ENCODE measurements at regions of chr7 and their contacts with region 1.

Region 1: DNA sequence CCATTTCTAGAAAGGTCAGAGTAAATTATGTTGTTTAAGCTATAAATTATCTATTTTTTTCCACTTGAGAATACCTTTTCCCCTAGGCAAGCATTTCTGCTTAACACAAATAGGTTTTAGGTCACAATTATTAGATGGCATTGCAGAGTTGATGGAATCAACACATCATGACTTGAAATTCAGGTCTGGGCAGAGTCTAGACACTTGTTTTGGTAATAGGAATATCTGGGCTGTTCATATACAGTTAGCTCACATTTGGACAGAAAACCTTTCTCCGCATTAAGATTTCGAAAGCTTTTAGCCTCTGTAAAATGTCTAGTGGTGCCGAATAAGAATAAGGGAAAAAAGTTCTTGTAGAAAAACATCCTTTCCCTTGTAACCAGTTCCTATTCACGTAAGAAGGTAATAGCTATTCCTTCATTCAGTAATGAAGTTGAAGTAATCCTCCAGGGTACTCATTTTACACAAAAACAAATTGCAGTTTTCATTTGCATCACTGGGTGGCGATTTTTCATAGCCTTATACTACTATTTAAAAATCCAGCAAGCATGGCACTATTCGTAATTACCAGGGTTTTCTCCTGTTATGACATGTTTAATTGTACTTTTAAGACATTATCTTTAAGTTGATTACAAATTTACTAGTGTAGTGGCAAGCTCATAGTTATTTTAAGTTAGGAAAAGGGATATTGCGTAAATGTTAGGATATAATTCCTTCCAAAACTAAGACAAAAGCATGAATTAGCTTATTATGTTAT is 37.0 kb downstream of the RPA3 start:
- DNase-seq: peak; percentile 14 to 23
- ATAC-seq: peak; percentile 98 to 99
- H3K4me3 ChIP-seq: peak overlapping the region; percentile 7 to 33 (median 12)
- H3K27ac ChIP-seq: peak overlapping the region; percentile 67 to 85 (median 73)
- H3K4me1 ChIP-seq: peaks cover 22 to 25% of the 10 kb centered on the region in 2 donors
- H3K27me3 ChIP-seq: no peaks in the 10 kb centered on the region
- CTCF ChIP-seq: peak; percentile 48 to 70 (median 56)
- POLR2A ChIP-seq: no peak

Region 2: DNA sequence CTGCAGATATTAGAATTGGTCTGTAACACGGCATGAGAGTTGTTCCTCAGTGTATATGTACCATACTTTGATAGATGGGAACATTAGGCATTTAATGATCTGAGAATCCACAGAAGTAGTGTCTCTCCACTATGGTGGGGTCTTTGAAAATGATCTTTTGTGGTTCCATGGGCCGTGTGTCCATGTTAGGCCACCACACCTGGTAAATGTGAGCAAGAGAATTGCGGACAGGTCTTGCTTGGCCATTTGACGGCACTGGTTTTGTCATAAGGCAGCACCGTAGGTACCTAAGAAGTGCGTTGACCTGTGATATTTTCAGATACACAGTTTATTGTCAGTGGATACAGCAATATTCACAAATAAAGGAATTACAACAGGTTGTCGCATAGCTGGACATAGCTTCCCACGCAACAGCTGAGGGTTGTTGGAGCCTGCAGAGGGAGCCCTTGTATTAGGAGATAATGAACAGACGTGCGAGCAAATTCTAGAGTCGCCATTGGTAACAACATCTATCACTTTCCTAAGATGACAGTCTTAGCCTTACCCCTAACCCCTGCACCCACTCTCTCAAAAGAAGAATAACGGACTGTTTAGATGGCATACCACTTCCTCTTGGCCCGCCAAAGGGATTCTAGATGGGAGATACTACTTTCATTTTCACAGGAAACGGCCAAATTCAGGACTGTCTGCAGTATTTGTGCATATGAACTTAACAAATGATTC is 257.0 kb before region 1 on chr7:
- in situ Hi-C with region 1: no loop called
- intact Hi-C with region 1: no loop called
- DNase-seq: peak; percentile 11 to 33
- ATAC-seq: peak; percentile 76 to 87
- H3K4me3 ChIP-seq: peak overlapping the region; percentile 39 to 59 (median 52)
- H3K27ac ChIP-seq: no peak overlapping the region
- H3K4me1 ChIP-seq: no peaks in the 10 kb centered on the region
- H3K27me3 ChIP-seq: no peaks in the 10 kb centered on the region
- CTCF ChIP-seq: peak; percentile 46 to 72 (median 62)
- POLR2A ChIP-seq: no peak

Region 3: GRCh38 chr7:7751243-7752092 is 70.1 kb after region 1 on chr7:
- in situ Hi-C with region 1: loop called in 3 of 4 experiments (anchors 5 to 10 kb)
- intact Hi-C with region 1: no loop called
- DNase-seq: no peak
- ATAC-seq: no peak
- H3K4me3 ChIP-seq: no peak overlapping the region
- H3K27ac ChIP-seq: no peak overlapping the region
- H3K4me1 ChIP-seq: peaks cover 5 to 6% of the 10 kb centered on the region in 2 donors
- H3K27me3 ChIP-seq: no peaks in the 10 kb centered on the region
- CTCF ChIP-seq: no peak
- POLR2A ChIP-seq: no peak

Region 4: DNA sequence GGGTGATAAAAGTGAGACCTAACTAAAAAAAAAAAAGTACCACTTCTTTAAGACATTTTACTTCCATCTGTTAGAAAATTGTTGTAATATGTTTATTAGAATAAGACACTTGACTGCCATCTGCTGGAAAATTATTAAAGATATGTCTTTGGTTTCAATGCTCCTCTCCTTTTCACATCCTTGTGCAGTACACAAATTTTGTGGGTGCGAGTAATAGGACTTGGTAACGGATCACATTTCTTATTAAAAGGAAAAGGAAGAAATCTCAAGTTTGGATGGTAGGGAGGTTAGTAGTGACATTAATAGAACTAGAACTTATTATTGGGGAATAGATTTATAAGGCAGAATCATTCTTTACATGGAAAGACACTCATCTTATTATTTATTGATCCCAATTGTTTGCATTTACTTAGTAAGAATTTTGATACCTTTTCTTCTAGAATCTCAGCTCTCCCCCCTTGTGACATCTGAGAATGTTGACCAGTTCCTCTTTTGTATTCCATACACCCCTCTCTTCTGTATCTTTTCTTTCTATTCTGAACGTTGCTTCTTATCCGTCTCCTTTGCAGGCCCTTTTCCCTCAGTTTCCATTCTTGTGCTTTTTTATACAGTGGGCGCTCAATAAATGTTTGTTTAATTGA is 80.1 kb after region 1 on chr7:
- in situ Hi-C with region 1: loop called in 3 of 4 experiments (anchors 5 to 10 kb)
- intact Hi-C with region 1: loop called (anchors 1 kb)
- DNase-seq: no peak
- ATAC-seq: peak; percentile 62 to 63
- H3K4me3 ChIP-seq: peak overlapping the region; percentile 32 to 50 (median 40)
- H3K27ac ChIP-seq: peak overlapping the region; percentile 21 to 70 (median 58)
- H3K4me1 ChIP-seq: peaks cover 9 to 14% of the 10 kb centered on the region in 2 donors
- H3K27me3 ChIP-seq: no peaks in the 10 kb centered on the region
- CTCF ChIP-seq: peak; percentile 29 to 58 (median 40)
- POLR2A ChIP-seq: no peak

Region 5: DNA sequence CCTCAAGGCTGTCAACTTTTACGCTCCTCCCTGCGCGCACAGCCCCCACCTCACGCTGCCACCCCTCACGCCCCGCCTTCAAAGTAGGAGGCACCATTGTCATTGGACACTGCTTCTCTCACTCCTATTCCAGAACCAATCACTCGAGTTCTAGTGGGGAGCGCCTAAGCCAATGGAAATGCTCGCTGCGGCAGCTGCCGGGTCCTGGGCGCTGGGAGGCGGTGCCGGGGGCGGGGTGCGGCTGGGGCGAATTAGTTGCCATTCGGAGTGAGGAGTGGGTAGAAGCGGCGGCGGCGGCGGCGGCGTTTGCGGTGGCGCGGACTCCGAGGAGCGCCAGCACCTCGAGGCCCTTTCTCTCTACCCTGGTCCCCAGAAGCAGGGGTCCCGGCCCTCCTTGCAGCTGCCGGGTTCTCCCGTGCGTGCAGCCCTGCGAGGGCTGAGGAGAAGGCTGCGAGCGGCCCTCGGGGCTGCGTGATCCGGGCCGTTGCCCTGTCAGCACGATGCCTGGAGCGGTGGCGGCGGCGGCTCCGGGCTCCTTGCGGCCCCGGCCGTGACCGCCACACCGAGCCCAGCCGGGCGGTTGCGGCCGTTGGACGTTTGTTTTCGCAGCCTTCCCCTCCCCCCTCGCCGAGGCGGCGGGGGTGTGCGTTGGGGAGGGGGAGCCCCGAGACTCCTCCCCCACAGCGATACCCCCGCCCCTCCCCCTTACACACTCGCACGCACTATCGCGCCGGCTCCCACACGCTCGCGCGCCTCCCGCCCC is 287.4 kb after region 1 on chr7 and contains the start of gene GLCCI1:
- in situ Hi-C with region 1: loop called in 1 of 4 experiments (anchors 25 kb)
- intact Hi-C with region 1: loop called (anchors 5 kb)
- DNase-seq: peak; percentile 97
- ATAC-seq: peak; percentile 96 to 97
- H3K4me3 ChIP-seq: peak within 1 kb of the TSS; percentile 83 to 93 (median 86)
- H3K27ac ChIP-seq: peak within 1 kb of the TSS; percentile 91 to 98 (median 93)
- H3K4me1 ChIP-seq: peaks cover 13 to 22% of the 10 kb centered on the region in 2 donors
- H3K27me3 ChIP-seq: no peaks in the 10 kb centered on the region
- CTCF ChIP-seq: no peak
- POLR2A ChIP-seq: peak; percentile 79 to 95
- total RNA-seq, gene GLCCI1: 1.2 to 6.1 (median 2.6) TPM